ENCODE measurements at regions of chr5 and their contacts with region 1.

Region 1: GRCh38 chr5:42908509-42909488 is 97.1 kb upstream of the SELENOP start:
- DNase-seq: peak; percentile 76 to 93 (median 88)
- ATAC-seq: peak; percentile 92
- H3K4me3 ChIP-seq: peak overlapping the region; percentile 72
- H3K4me3 Mint-ChIP-seq: peak overlapping the region; percentile 89 to 98 (median 94)
- H3K27ac ChIP-seq: peak overlapping the region; percentile 76
- H3K27ac Mint-ChIP-seq: peak overlapping the region; percentile 64 to 97 (median 95)
- H3K4me1 ChIP-seq: peaks cover 0 to 4% of the 10 kb centered on the region in 2 donors
- H3K4me1 Mint-ChIP-seq: peaks cover 5 to 22% (median 19%) of the 10 kb centered on the region in 7 donors
- H3K27me3 ChIP-seq: no peaks in the 10 kb centered on the region
- H3K27me3 Mint-ChIP-seq: peaks cover 0 to 43% (median 0%) of the 10 kb centered on the region in 5 donors

Region 2: GRCh38 chr5:43008369-43009153 is 99.8 kb after region 1 on chr5:
- CTCF ChIA-PET with region 1: interaction called, 5 read pairs
- POLR2A ChIA-PET with region 1: interaction called, 43 read pairs
- intact Hi-C with region 1: loop called in 1 of 2 experiments (anchors 1 kb)
- DNase-seq: peak; percentile 79 to 95 (median 90)
- ATAC-seq: peak; percentile 78
- H3K4me3 ChIP-seq: peak overlapping the region; percentile 72
- H3K4me3 Mint-ChIP-seq: peak overlapping the region; percentile 85 to 98 (median 92)
- H3K27ac ChIP-seq: peak overlapping the region; percentile 92
- H3K27ac Mint-ChIP-seq: peak overlapping the region; percentile 96 to 100 (median 98)
- H3K4me1 ChIP-seq: peaks cover 22 to 24% of the 10 kb centered on the region in 2 donors
- H3K4me1 Mint-ChIP-seq: peaks cover 17 to 47% (median 29%) of the 10 kb centered on the region in 7 donors
- H3K27me3 ChIP-seq: no peaks in the 10 kb centered on the region
- H3K27me3 Mint-ChIP-seq: peaks cover 0 to 4% (median 0%) of the 10 kb centered on the region in 5 donors

Region 3: DNA sequence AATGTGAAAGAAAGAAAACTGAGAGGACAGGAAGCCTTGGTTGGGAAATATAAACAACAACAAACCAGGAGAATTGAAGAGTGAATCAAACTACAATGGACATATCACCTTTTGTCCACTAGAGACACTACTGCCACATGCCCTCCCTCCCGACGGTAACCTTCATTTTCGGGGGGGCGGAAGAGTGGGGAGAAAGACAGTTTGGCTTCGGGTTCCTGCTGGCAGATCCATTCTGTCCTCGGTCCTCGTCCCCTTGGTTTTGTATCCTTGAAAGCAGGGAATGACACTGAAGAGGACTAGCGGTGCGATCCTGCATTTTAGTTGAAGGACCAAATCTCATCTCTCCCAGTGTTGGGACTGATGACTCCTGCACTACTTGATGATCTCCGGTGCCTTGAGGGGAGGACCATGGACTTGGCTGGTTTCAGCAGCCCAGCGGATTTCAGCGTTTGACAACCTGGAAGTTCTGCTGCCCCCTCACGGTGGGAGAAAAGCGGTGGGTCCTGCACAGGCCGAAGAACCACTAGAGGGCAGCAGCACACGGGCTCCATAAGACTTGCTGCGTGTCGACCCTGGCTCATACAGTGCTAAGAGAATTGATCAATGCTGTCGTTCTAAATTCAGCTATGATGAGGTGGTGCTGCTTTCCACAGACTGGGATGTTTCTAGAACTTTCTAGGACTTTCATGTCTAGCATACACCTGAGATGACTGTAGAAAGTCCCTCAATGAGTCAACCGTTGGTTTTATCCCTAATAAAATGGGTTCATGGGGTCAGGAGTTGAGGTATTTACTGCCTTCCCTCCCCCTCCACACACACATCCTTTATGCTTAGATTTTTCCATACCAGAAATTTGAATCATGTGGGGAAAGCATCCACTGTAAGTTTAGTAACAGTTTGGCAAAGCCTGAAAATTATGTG is 196.8 kb after region 1 on chr5:
- CTCF ChIA-PET with region 1: interaction called, 18 read pairs
- POLR2A ChIA-PET with region 1: interaction called, 6 read pairs
- intact Hi-C with region 1: loop called (anchors 1 kb)
- DNase-seq: peak; percentile 75 to 90 (median 85)
- ATAC-seq: peak; percentile 99
- H3K4me3 ChIP-seq: peak overlapping the region; percentile 66
- H3K4me3 Mint-ChIP-seq: peak overlapping the region; percentile 77 to 93 (median 89)
- H3K27ac ChIP-seq: peak overlapping the region; percentile 59
- H3K27ac Mint-ChIP-seq: peak overlapping the region; percentile 43 to 92 (median 88)
- H3K4me1 ChIP-seq: peaks cover 6 to 22% of the 10 kb centered on the region in 2 donors
- H3K4me1 Mint-ChIP-seq: peaks cover 21 to 49% (median 38%) of the 10 kb centered on the region in 7 donors
- H3K27me3 ChIP-seq: no peaks in the 10 kb centered on the region
- H3K27me3 Mint-ChIP-seq: no peaks in the 10 kb centered on the region

Region 4: GRCh38 chr5:43305948-43306565 is 397.3 kb after region 1 on chr5:
- CTCF ChIA-PET with region 1: interaction called, 6 read pairs
- POLR2A ChIA-PET with region 1: no interaction called
- intact Hi-C with region 1: loop called in 1 of 2 experiments (anchors 1 kb)
- DNase-seq: peak in 7 of 9 donors; percentile 24 to 64 (median 50)
- ATAC-seq: peak; percentile 79
- H3K4me3 ChIP-seq: no peak overlapping the region
- H3K4me3 Mint-ChIP-seq: peak overlapping the region in 1 of 10 donors; percentile 18
- H3K27ac ChIP-seq: no peak overlapping the region
- H3K27ac Mint-ChIP-seq: peak overlapping the region in 6 of 9 donors; percentile 4 to 86 (median 30)
- H3K4me1 ChIP-seq: peaks cover 0 to 10% of the 10 kb centered on the region in 2 donors
- H3K4me1 Mint-ChIP-seq: peaks cover 21 to 82% (median 52%) of the 10 kb centered on the region in 7 donors
- H3K27me3 ChIP-seq: no peaks in the 10 kb centered on the region
- H3K27me3 Mint-ChIP-seq: no peaks in the 10 kb centered on the region

Region 5: DNA sequence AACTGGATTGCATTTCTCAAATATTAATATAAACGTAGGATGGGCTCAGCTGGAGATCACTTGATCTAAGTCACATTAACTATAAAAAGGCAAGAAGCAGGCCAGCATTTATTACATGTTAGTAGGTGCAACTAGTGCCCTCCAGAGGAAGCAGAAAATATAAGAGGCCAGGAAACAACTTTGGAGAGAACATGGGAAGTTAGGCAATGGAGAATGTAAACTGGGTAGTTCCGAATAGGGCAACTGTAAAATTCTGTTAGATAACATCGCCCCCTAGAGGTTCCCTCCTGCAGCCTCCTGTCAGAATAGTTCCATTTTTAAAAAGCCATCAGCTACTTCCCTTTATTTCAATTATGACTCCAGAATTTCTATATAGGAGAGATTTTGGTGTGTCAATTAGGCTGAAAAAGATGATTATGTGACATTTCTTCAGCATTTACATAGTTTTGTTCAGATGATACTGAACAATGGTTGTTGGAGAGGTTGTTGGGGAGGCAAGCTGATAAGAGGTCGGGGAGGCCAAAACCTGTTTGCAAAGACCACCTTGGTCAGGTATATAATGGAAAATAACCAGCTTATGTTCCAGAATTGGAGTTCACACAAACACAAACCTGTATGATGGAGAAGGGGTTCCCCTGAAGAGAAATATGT is 481.0 kb after region 1 on chr5:
- CTCF ChIA-PET with region 1: no interaction called
- POLR2A ChIA-PET with region 1: no interaction called
- intact Hi-C with region 1: loop called in 1 of 2 experiments (anchors 1 kb)
- DNase-seq: peak in 8 of 9 donors; percentile 28 to 60 (median 50)
- ATAC-seq: peak; percentile 92
- H3K4me3 ChIP-seq: no peak overlapping the region
- H3K4me3 Mint-ChIP-seq: no peak overlapping the region
- H3K27ac ChIP-seq: no peak overlapping the region
- H3K27ac Mint-ChIP-seq: peak overlapping the region in 2 of 9 donors; percentile 62 to 67
- H3K4me1 ChIP-seq: peaks cover 0 to 7% of the 10 kb centered on the region in 2 donors
- H3K4me1 Mint-ChIP-seq: peaks cover 4 to 48% (median 34%) of the 10 kb centered on the region in 7 donors
- H3K27me3 ChIP-seq: no peaks in the 10 kb centered on the region
- H3K27me3 Mint-ChIP-seq: no peaks in the 10 kb centered on the region

Region 6: DNA sequence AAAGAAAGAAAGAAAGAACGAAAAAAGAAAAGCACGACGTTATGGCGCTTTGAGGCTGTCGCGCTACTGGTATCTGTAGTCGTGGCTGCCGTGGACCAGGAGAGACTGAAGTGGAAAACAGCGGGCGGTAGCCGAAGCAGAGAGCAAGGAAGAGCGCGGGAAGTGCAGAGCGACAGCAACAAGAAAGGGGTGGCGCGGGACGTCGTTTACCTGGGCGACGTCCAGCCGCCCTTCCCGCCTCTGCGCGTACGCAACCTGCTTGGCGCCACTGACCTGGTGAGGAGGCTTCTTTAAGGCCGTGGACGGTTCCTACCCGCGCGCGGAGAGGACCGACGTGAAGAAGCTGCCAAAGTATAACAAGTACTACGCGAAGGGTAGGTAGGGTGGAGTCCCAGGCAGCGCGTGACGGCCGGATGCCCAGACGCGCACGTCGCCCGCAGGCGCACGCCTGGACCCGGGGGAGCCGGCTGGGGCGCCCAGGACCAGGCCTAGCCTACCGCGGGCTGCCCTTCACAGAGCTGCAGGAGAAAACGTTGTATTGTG is 488.0 kb after region 1 on chr5:
- CTCF ChIA-PET with region 1: interaction called, 3 read pairs
- POLR2A ChIA-PET with region 1: no interaction called
- intact Hi-C with region 1: loop called in 1 of 2 experiments (anchors 2 kb)
- DNase-seq: peak; percentile 42 to 74 (median 66)
- ATAC-seq: peak; percentile 96
- H3K4me3 ChIP-seq: peak overlapping the region; percentile 80
- H3K4me3 Mint-ChIP-seq: peak overlapping the region; percentile 88 to 100 (median 98)
- H3K27ac ChIP-seq: peak overlapping the region; percentile 76
- H3K27ac Mint-ChIP-seq: peak overlapping the region; percentile 93 to 99 (median 97)
- H3K4me1 ChIP-seq: peaks cover 3 to 7% of the 10 kb centered on the region in 2 donors
- H3K4me1 Mint-ChIP-seq: peaks cover 15 to 62% (median 41%) of the 10 kb centered on the region in 7 donors
- H3K27me3 ChIP-seq: no peaks in the 10 kb centered on the region
- H3K27me3 Mint-ChIP-seq: no peaks in the 10 kb centered on the region

Region 7: GRCh38 chr5:43556857-43557542 is 648.2 kb after region 1 on chr5 and contains the start of gene PAIP1:
- CTCF ChIA-PET with region 1: no interaction called
- POLR2A ChIA-PET with region 1: interaction called, 4 read pairs
- intact Hi-C with region 1: loop called in 1 of 2 experiments (anchors 2 kb)
- DNase-seq: peak; percentile 80 to 89 (median 87)
- ATAC-seq: peak; percentile 89
- H3K4me3 ChIP-seq: peak within 1 kb of the TSS; percentile 79
- H3K4me3 Mint-ChIP-seq: peak within 1 kb of the TSS in 7 of 10 donors; percentile 88 to 97 (median 95)
- H3K27ac ChIP-seq: peak within 1 kb of the TSS; percentile 96
- H3K27ac Mint-ChIP-seq: peak within 1 kb of the TSS; percentile 91 to 99 (median 98)
- H3K4me1 ChIP-seq: peaks cover 17 to 30% of the 10 kb centered on the region in 2 donors
- H3K4me1 Mint-ChIP-seq: peaks cover 6 to 17% (median 7%) of the 10 kb centered on the region in 7 donors
- H3K27me3 ChIP-seq: no peaks in the 10 kb centered on the region
- H3K27me3 Mint-ChIP-seq: peaks cover 0 to 18% (median 5%) of the 10 kb centered on the region in 5 donors
- total RNA-seq, gene PAIP1: 20.7 to 41.7 (median 39.2) TPM

Measured in naive thymus-derived CD4-positive, alpha-beta T cell (primary cell).